ENCODE measurements at regions of chr19 and their contacts with region 1.

Region 1: GRCh38 chr19:5057861-5058260 is 88.9 kb downstream of the KDM4B start:
- DNase-seq: no peak
- H3K4me3 ChIP-seq: no peak overlapping the region
- H3K27ac ChIP-seq: no peak overlapping the region
- H3K4me1 ChIP-seq: no peaks in the 10 kb centered on the region
- H3K27me3 ChIP-seq: no peaks in the 10 kb centered on the region
- CTCF ChIP-seq: no peak
- POLR2A ChIP-seq: no peak

Region 2: DNA sequence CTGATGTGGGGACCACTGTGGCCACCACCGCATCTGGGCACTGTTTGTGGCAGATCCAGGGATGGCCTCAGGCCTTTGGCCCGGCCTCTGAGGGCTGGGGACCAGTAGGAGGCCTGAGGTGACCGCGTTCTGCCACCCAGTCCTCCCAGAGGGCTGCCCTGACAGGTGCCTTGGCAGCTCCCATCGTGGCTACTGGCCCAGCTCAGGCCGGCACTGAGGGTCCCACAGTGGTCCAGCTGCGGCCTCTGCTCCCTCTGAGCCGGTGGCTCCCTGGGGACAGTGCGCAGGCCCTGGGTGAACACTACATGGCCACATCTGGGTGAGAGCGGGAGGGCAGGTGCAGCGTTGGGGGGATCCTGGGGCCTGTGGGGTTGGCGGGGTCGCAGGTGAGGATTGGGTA is 27.0 kb before region 1 on chr19:
- CTCF ChIA-PET with region 1: no interaction called
- POLR2A ChIA-PET with region 1: no interaction called
- dilution Hi-C with region 1: no loop called
- intact Hi-C with region 1: no loop called
- DNase-seq: no peak
- H3K4me3 ChIP-seq: no peak overlapping the region
- H3K27ac ChIP-seq: no peak overlapping the region
- H3K4me1 ChIP-seq: no peaks in the 10 kb centered on the region
- H3K27me3 ChIP-seq: no peaks in the 10 kb centered on the region
- CTCF ChIP-seq: no peak
- POLR2A ChIP-seq: no peak

Region 3: DNA sequence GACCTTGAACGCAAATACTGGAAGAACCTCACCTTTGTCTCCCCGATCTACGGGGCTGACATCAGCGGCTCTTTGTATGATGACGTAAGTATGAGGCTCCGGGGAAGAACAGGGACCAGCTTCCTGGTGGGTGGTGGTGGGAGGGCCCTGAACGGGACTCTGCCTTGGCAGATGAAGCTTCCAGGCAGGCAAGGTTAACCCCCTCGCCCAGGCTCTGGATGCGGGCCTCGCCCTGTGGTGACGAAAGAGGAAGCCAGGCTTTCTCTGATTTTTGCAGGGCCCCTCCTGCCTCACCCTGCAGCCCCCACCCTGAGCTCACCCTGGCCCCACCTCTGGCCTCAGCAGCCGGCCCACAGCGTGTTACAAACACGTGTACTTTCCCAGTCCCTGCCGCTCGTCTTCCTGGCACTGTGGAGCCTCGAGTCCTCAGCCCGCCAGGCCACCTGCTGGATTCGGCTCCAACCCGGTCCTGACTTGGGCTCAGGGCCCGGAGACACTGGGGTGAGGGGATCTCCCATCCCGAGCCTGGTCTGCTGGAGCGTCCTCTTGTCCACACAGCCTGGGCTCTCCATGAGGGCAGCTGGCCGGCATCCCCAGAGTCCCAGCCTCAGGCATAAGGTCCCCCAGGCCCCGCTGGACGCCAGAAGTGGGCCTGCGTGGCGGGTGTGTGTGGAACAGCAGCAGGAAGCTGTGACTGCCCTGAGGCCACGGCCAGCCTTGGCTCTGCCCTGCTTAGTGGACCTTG is 16.5 kb before region 1 on chr19:
- CTCF ChIA-PET with region 1: no interaction called
- POLR2A ChIA-PET with region 1: no interaction called
- dilution Hi-C with region 1: no loop called
- intact Hi-C with region 1: no loop called
- DNase-seq: no peak
- H3K4me3 ChIP-seq: no peak overlapping the region
- H3K27ac ChIP-seq: no peak overlapping the region
- H3K4me1 ChIP-seq: peaks cover 5% of the 10 kb centered on the region
- H3K27me3 ChIP-seq: no peaks in the 10 kb centered on the region
- CTCF ChIP-seq: no peak
- POLR2A ChIP-seq: no peak

Region 4: GRCh38 chr19:5128251-5128935 is 70.5 kb after region 1 on chr19:
- CTCF ChIA-PET with region 1: no interaction called
- POLR2A ChIA-PET with region 1: no interaction called
- dilution Hi-C with region 1: no loop called
- intact Hi-C with region 1: loop called (anchors 5 kb)
- DNase-seq: peak; percentile 82
- H3K4me3 ChIP-seq: no peak overlapping the region
- H3K27ac ChIP-seq: no peak overlapping the region
- H3K4me1 ChIP-seq: no peaks in the 10 kb centered on the region
- H3K27me3 ChIP-seq: no peaks in the 10 kb centered on the region
- CTCF ChIP-seq: no peak
- POLR2A ChIP-seq: no peak

Region 5: GRCh38 chr19:5186293-5187050 is 128.6 kb after region 1 on chr19:
- CTCF ChIA-PET with region 1: no interaction called
- POLR2A ChIA-PET with region 1: no interaction called
- dilution Hi-C with region 1: no loop called
- intact Hi-C with region 1: no loop called
- DNase-seq: no peak
- H3K4me3 ChIP-seq: no peak overlapping the region
- H3K27ac ChIP-seq: no peak overlapping the region
- H3K4me1 ChIP-seq: no peaks in the 10 kb centered on the region
- H3K27me3 ChIP-seq: peaks cover 4 to 6% of the 10 kb centered on the region in 2 experiments
- CTCF ChIP-seq: no peak
- POLR2A ChIP-seq: no peak